Dendritic cell treated with granulocyte-macrophage colony-stimulating factor and Interleukin-4, amounts not matched to agents 40 ng/mL and 50 ng/mL, for 4 days (primary cell): ENCODE measurements at regions of chr16 and their contacts with region 1.

Region 1: GRCh38 chr16:31128711-31129567 is 6.6 kb downstream of the PRSS8 start:
- H3K4me3 Mint-ChIP-seq: peak overlapping the region; percentile 71
- H3K27ac Mint-ChIP-seq: peak overlapping the region; percentile 94
- H3K4me1 Mint-ChIP-seq: peaks cover 89% of the 10 kb centered on the region
- H3K27me3 Mint-ChIP-seq: no peaks in the 10 kb centered on the region

Region 2: DNA sequence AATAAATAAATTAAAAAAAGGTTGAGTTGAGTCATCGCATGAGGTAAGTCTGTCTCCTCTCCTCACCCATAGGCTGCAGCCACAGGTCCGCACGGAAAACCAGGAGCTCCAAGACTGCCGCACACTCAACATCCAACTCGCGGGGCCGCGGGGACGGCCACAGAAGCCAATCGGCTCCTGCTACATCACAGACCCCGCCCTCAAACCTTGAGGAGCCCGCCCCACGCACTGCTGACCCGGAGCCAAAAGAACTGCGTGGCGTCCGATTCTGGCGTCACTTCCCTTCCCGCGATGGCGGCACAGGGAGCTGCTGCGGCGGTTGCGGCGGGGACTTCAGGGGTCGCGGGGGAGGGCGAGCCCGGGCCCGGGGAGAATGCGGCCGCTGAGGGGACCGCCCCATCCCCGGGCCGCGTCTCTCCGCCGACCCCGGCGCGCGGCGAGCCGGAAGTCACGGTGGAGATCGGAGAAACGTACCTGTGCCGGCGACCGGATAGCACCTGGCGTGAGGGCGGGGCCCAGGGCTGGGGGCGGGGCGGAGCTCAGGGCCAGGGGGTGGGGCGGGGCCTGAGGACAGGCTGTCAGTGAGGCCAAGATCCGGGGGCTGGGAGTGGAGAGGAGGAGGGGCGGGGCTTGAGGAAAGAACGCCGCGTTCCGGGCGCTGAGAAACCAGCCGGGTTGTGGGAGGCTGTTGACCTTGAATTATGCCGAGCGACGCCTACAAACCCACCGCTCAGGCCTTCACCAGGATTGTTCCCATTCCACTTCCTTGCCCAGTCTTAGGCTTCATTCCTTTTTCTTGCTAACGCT is 11.3 kb before region 1 on chr16 and contains the start of gene KAT8:
- intact Hi-C with region 1: loop called (anchors 1 kb)
- H3K4me3 Mint-ChIP-seq: peak within 1 kb of the TSS; percentile 91
- H3K27ac Mint-ChIP-seq: peak within 1 kb of the TSS; percentile 98
- H3K4me1 Mint-ChIP-seq: peaks cover 58% of the 10 kb centered on the region
- H3K27me3 Mint-ChIP-seq: no peaks in the 10 kb centered on the region